Activated CD4-positive, alpha-beta T cell treated with anti-CD3 and anti-CD28 coated beads, Interleukin-2, amount 10 ng/mL, durations not matched to agents 24 days and 14 days (primary cell): ENCODE measurements at regions of chr6 and their contacts with region 1.

Region 1: GRCh38 chr6:27503436-27504030 is 30.6 kb upstream of the ZNF184 start:
- DNase-seq: peak; percentile 92
- H3K4me3 Mint-ChIP-seq: peak overlapping the region; percentile 94
- H3K27ac Mint-ChIP-seq: peak overlapping the region; percentile 81
- H3K4me1 Mint-ChIP-seq: peaks cover 19% of the 10 kb centered on the region
- H3K27me3 Mint-ChIP-seq: peaks cover 46% of the 10 kb centered on the region

Region 2: GRCh38 chr6:27359231-27359630 is 144.3 kb before region 1 on chr6:
- intact Hi-C with region 1: no loop called
- DNase-seq: no peak
- H3K4me3 Mint-ChIP-seq: no peak overlapping the region
- H3K27ac Mint-ChIP-seq: no peak overlapping the region
- H3K4me1 Mint-ChIP-seq: no peaks in the 10 kb centered on the region
- H3K27me3 Mint-ChIP-seq: no peaks in the 10 kb centered on the region

Region 3: DNA sequence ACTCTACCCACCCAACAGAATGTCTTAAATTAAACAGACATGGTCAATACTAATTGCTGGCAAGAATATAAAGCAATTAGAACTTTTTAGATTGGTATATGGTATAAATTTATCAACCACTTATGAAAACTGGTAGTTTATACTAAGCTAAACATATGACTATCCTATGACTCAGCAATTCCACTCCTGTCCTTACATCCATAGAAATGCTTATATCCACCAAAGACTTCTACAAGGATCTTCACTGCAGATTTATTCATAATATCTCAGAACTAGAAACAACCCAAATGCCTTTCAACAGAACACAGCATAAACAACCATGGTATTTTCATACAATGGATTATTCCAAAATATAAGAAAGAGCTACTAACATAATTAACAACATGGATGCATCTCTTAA is 35.2 kb before region 1 on chr6:
- intact Hi-C with region 1: no loop called
- DNase-seq: no peak
- H3K4me3 Mint-ChIP-seq: no peak overlapping the region
- H3K27ac Mint-ChIP-seq: no peak overlapping the region
- H3K4me1 Mint-ChIP-seq: peaks cover 44% of the 10 kb centered on the region
- H3K27me3 Mint-ChIP-seq: no peaks in the 10 kb centered on the region

Region 4: GRCh38 chr6:27518881-27519795 is 15.6 kb after region 1 on chr6:
- intact Hi-C with region 1: loop called (anchors 1 kb)
- DNase-seq: peak; percentile 84
- H3K4me3 Mint-ChIP-seq: peak overlapping the region; percentile 93
- H3K27ac Mint-ChIP-seq: peak overlapping the region; percentile 85
- H3K4me1 Mint-ChIP-seq: peaks cover 13% of the 10 kb centered on the region
- H3K27me3 Mint-ChIP-seq: peaks cover 33% of the 10 kb centered on the region